Caco-2 (cell line): ENCODE measurements at regions of chr7 and their contacts with region 1.

Region 1: DNA sequence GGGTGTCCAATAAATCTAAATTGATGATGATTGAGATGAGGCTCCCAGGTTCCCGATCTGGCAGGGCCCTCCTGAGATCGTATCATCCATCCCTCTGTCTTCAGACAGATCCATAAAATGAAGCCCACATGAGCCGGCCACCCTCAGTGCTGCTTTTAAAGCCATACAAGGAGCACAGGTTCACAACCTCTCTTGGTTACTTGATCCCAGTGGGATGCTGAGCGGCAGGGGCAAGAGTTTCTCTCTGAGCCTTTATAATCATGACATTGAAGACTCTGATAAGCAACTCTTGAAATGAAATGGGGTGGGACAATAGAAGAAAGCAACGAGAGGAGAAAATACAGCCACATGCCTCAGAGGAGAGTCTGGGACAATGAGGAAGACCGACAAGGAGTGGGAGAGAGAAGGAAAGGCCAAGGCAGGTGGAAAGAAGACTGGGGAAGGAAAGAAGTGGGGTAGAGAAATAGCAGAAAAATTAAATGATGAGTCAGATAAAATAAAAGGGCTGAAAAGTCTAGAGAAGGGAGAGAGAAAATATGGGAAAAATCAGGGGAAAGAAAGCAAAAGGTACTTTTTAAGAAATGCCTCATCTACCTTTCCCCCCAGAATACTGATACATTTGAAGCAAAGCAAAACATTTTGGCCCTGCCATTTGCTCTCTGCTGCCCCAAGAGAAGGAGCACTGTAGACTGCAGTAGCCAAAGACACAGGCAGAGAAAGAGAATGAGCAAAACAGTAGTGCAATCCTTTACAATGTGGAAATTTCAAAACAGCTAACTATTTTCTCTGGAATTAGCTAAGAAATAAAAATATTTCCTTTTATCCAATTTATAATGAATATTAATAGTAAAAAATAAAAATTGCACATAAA is 14.6 kb downstream of the GBX1 start:
- DNase-seq: no peak
- H3K4me3 ChIP-seq: no peak overlapping the region
- H3K4me3 Mint-ChIP-seq: no peak overlapping the region
- H3K27ac Mint-ChIP-seq: no peak overlapping the region
- H3K4me1 ChIP-seq: no peaks in the 10 kb centered on the region
- H3K4me1 Mint-ChIP-seq: no peaks in the 10 kb centered on the region
- H3K27me3 ChIP-seq: peaks cover 1% of the 10 kb centered on the region; the same call in 1 of the 2 replicates
- H3K27me3 Mint-ChIP-seq: peaks cover 4% of the 10 kb centered on the region
- CTCF ChIP-seq: peak in 1 of 2 experiments; percentile 34

Region 2: GRCh38 chr7:151179287-151179860 is 26.5 kb after region 1 on chr7:
- CTCF ChIA-PET with region 1: interaction called, 10 read pairs
- POLR2A ChIA-PET with region 1: no interaction called
- intact Hi-C with region 1: no loop called
- DNase-seq: peak in 1 of 2 experiments; percentile 18
- H3K4me3 ChIP-seq: no peak overlapping the region
- H3K4me3 Mint-ChIP-seq: no peak overlapping the region
- H3K27ac Mint-ChIP-seq: no peak overlapping the region
- H3K4me1 ChIP-seq: no peaks in the 10 kb centered on the region
- H3K4me1 Mint-ChIP-seq: no peaks in the 10 kb centered on the region
- H3K27me3 ChIP-seq: no peaks in the 10 kb centered on the region
- H3K27me3 Mint-ChIP-seq: peaks cover 11% of the 10 kb centered on the region
- CTCF ChIP-seq: no peak

Region 3: GRCh38 chr7:151271699-151272355 is 118.9 kb after region 1 on chr7:
- CTCF ChIA-PET with region 1: no interaction called
- POLR2A ChIA-PET with region 1: no interaction called
- intact Hi-C with region 1: no loop called
- DNase-seq: peak in 1 of 2 experiments; percentile 45
- H3K4me3 ChIP-seq: no peak overlapping the region
- H3K4me3 Mint-ChIP-seq: no peak overlapping the region
- H3K27ac Mint-ChIP-seq: no peak overlapping the region
- H3K4me1 ChIP-seq: peaks cover 8% of the 10 kb centered on the region; the same call in 1 of the 2 replicates
- H3K4me1 Mint-ChIP-seq: no peaks in the 10 kb centered on the region
- H3K27me3 ChIP-seq: no peaks in the 10 kb centered on the region
- H3K27me3 Mint-ChIP-seq: peaks cover 8% of the 10 kb centered on the region
- CTCF ChIP-seq: no peak